ENCODE measurements at regions of chr4 and their contacts with region 1.

Region 1: DNA sequence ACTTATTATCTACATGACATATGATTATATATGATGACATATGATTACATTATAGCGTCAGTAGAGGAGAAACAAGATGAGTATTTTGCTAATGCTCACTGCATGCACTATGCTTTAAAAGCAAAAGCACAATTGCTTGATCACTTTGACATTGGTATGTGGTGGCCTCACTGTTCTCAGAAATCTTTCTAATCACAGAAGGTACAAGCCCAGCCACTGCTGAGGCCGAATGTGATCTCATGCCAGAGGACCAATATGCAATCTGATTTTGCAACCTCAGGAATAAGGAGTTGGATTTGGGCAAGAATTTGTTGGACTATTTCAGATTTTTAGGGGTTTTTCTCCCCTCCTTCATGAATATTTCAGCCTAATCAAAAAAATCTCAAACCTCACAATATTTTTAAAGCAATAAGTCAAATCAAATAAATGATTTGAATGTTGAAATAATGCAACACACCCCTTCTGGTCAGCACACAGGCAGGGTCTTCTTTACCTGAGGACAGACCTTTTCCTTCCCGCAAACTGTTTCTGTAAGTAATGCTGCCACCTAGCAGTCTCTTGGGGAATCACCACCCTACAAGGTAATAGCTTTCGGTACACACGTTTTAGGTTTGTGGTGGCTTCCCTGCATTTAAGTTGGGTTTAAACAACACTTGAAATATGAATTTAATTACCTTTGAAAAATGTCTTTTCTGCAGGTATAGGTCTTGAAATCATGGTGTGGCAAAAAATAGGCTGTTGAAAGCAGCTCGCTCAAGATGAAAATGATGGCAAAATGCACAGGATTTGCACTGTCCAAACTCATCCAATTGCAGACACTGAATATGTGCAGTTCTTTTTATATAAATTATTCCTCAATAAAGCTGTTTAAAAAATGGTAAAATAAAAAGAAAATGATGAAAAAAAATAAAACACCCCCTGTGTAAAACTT is 4.8 kb upstream of the CXCL13 start:
- DNase-seq: no peak
- ATAC-seq: peak; percentile 88
- H3K4me3 ChIP-seq: no peak overlapping the region
- H3K27ac ChIP-seq: no peak overlapping the region
- H3K4me1 ChIP-seq: no peaks in the 10 kb centered on the region
- H3K27me3 ChIP-seq: no peaks in the 10 kb centered on the region
- CTCF ChIP-seq: peak; percentile 81 to 85 (median 82)
- EP300 ChIP-seq: no peak
- POLR2A ChIP-seq: no peak
- RAD21 ChIP-seq: peak; percentile 86

Region 2: GRCh38 chr4:77358315-77358928 is 242.4 kb before region 1 on chr4:
- CTCF ChIA-PET with region 1: interaction called, 12 read pairs
- POLR2A ChIA-PET with region 1: no interaction called
- RAD21 ChIA-PET with region 1: no interaction called
- SMC1A ChIA-PET with region 1: interaction called, 4 read pairs
- in situ Hi-C with region 1: no loop called
- intact Hi-C with region 1: no loop called
- DNase-seq: no peak
- ATAC-seq: peak; percentile 88
- H3K4me3 ChIP-seq: no peak overlapping the region
- H3K27ac ChIP-seq: no peak overlapping the region
- H3K4me1 ChIP-seq: no peaks in the 10 kb centered on the region; the same call in 1 of the 2 replicates
- H3K27me3 ChIP-seq: no peaks in the 10 kb centered on the region; a peak in 1 of 4 replicates
- CTCF ChIP-seq: peak; percentile 60 to 65 (median 60); a peak in 5 of 6 replicates
- EP300 ChIP-seq: no peak
- POLR2A ChIP-seq: no peak
- RAD21 ChIP-seq: peak; percentile 67

Region 3: DNA sequence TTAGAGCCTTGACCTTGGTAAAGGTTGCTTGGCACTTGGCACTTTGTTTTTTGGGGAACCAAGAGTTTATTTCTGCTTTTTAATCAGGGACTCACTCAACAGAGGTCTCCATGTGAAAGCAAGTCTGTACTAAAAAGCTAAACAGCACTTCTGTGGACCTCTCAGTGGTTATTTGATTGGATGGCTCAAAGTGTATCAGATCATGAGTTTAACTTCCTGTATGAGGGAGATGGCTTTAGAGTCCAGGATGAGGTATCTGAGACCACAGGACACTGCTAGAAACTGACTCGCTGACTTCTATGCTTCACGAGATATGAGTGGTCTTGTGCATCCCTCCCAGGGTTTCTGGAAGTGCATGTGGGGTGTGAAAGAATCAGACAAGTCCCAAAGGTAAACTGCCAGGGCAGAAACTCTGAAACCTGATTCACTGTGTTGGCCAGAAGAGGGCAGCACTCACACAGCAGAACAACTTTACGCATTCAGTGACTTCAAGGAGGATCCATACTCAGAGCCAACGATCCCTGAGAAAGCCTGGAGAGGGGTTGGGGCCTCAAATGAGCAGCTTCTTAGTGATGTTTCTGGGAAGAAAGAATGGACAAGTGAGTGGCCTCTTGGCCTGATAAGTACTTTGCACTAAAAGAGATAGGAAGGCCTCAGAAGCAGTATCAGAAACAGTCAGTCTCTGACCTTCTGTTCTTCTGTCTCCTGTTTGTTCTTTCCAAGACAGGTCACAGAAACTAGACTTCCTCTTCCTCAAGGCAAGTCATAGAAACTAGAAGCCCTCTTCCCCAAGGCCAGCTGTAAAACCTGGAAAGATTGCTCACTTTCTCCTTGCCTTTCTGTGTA is 215.4 kb before region 1 on chr4:
- CTCF ChIA-PET with region 1: interaction called, 84 read pairs
- POLR2A ChIA-PET with region 1: no interaction called
- RAD21 ChIA-PET with region 1: interaction called, 16 read pairs
- SMC1A ChIA-PET with region 1: interaction called, 43 read pairs
- in situ Hi-C with region 1: loop called (anchors 5 kb)
- intact Hi-C with region 1: loop called (anchors 1 kb)
- DNase-seq: peak; percentile 15
- ATAC-seq: peak; percentile 93
- H3K4me3 ChIP-seq: no peak overlapping the region
- H3K27ac ChIP-seq: no peak overlapping the region
- H3K4me1 ChIP-seq: no peaks in the 10 kb centered on the region
- H3K27me3 ChIP-seq: no peaks in the 10 kb centered on the region
- CTCF ChIP-seq: peak; percentile 84 to 85 (median 84)
- EP300 ChIP-seq: no peak
- POLR2A ChIP-seq: no peak
- RAD21 ChIP-seq: peak; percentile 89

Region 4: GRCh38 chr4:77465271-77465670 is 135.5 kb before region 1 on chr4:
- CTCF ChIA-PET with region 1: interaction called, 63 read pairs
- POLR2A ChIA-PET with region 1: interaction called, 3 read pairs
- RAD21 ChIA-PET with region 1: interaction called, 15 read pairs
- SMC1A ChIA-PET with region 1: interaction called, 25 read pairs
- in situ Hi-C with region 1: no loop called
- intact Hi-C with region 1: loop called (anchors 5 kb)
- DNase-seq: no peak
- ATAC-seq: no peak
- H3K4me3 ChIP-seq: no peak overlapping the region
- H3K27ac ChIP-seq: no peak overlapping the region
- H3K4me1 ChIP-seq: no peaks in the 10 kb centered on the region
- H3K27me3 ChIP-seq: no peaks in the 10 kb centered on the region
- CTCF ChIP-seq: peak in 2 of 3 experiments; percentile 28 to 36; a peak in 3 of 6 replicates
- EP300 ChIP-seq: no peak
- POLR2A ChIP-seq: no peak
- RAD21 ChIP-seq: peak; percentile 55

Region 5: DNA sequence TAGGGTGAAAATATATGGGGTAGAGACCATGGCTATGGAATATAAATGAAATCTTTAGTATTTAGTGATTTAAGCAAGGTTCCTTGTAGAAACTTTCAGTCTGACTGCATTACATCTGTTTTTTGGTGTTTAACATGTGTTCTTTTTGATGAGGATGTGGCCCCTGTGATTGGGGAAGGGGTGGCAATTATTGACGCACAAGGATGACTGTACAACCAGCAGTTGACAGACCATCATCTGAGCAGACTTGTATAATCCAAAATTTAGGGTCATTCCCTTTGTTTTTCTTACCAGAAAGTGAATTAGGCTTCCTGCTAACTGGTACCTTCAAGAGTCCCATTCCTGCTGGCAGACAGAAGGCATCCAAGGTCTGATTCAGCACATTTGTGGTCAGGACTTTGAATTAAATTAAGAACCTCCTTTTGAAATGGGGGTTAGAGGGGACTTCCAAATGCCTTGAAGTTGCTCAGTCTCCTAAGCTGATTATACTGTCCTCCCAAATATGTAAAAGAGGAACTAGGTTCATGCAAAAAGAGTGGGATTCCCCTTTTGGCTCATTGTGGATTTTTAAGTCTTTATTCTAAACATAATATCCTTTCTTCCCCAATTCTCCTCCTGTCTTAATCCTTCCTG is 107.5 kb before region 1 on chr4:
- CTCF ChIA-PET with region 1: interaction called, 9 read pairs
- POLR2A ChIA-PET with region 1: no interaction called
- RAD21 ChIA-PET with region 1: no interaction called
- SMC1A ChIA-PET with region 1: interaction called, 11 read pairs
- in situ Hi-C with region 1: no loop called
- intact Hi-C with region 1: no loop called
- DNase-seq: peak; percentile 35
- ATAC-seq: peak; percentile 91
- H3K4me3 ChIP-seq: no peak overlapping the region
- H3K27ac ChIP-seq: peak overlapping the region; percentile 35; the same call in 1 of the 2 replicates
- H3K4me1 ChIP-seq: peaks cover 5% of the 10 kb centered on the region; the same call in 1 of the 2 replicates
- H3K27me3 ChIP-seq: no peaks in the 10 kb centered on the region
- CTCF ChIP-seq: no peak
- EP300 ChIP-seq: 0 out of 4 replicates have a peak, but pooled peaks of 1 of the 2 experiments have one; percentile 36
- POLR2A ChIP-seq: no peak
- RAD21 ChIP-seq: no peak

Region 6: DNA sequence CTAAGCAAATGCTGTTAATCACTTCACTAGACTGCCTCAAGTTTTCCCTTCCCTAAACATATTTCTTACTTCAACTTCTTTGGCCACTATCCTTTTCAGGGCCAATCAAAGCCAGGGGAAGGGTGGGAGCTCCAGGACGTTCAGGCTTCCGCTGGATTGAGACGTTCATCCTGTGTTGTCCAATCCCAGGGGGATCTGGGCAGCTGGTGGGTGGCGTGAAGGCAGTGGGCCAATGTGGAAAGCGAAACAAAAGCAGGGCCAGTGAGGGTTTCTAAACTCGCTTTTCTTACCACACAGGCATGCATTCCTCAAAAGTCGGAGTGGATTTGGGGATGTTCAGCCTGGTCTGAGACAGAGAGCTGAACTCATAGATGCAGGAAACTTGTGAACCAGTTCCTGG is 12.5 kb after region 1 on chr4:
- CTCF ChIA-PET with region 1: interaction called, 22 read pairs
- POLR2A ChIA-PET with region 1: no interaction called
- RAD21 ChIA-PET with region 1: interaction called, 8 read pairs
- SMC1A ChIA-PET with region 1: interaction called, 6 read pairs
- in situ Hi-C with region 1: no loop called
- intact Hi-C with region 1: no loop called
- DNase-seq: no peak
- ATAC-seq: no peak
- H3K4me3 ChIP-seq: no peak overlapping the region
- H3K27ac ChIP-seq: no peak overlapping the region
- H3K4me1 ChIP-seq: no peaks in the 10 kb centered on the region
- H3K27me3 ChIP-seq: peaks cover 0 to 2% of the 10 kb centered on the region in 2 experiments; a peak in 1 of 4 replicates
- CTCF ChIP-seq: no peak
- EP300 ChIP-seq: no peak
- POLR2A ChIP-seq: no peak
- RAD21 ChIP-seq: no peak

Region 7: GRCh38 chr4:77692847-77693432 is 92.2 kb after region 1 on chr4:
- CTCF ChIA-PET with region 1: no interaction called
- POLR2A ChIA-PET with region 1: no interaction called
- RAD21 ChIA-PET with region 1: no interaction called
- SMC1A ChIA-PET with region 1: no interaction called
- in situ Hi-C with region 1: no loop called
- intact Hi-C with region 1: no loop called
- DNase-seq: no peak
- ATAC-seq: no peak
- H3K4me3 ChIP-seq: no peak overlapping the region
- H3K27ac ChIP-seq: no peak overlapping the region
- H3K4me1 ChIP-seq: no peaks in the 10 kb centered on the region
- H3K27me3 ChIP-seq: no peaks in the 10 kb centered on the region; a peak in 1 of 4 replicates
- CTCF ChIP-seq: no peak
- EP300 ChIP-seq: no peak
- POLR2A ChIP-seq: no peak
- RAD21 ChIP-seq: no peak

Region 8: GRCh38 chr4:77742054-77742453 is 141.3 kb after region 1 on chr4:
- CTCF ChIA-PET with region 1: no interaction called
- POLR2A ChIA-PET with region 1: no interaction called
- RAD21 ChIA-PET with region 1: no interaction called
- SMC1A ChIA-PET with region 1: no interaction called
- in situ Hi-C with region 1: no loop called
- intact Hi-C with region 1: no loop called
- DNase-seq: no peak
- ATAC-seq: no peak
- H3K4me3 ChIP-seq: no peak overlapping the region
- H3K27ac ChIP-seq: no peak overlapping the region
- H3K4me1 ChIP-seq: no peaks in the 10 kb centered on the region
- H3K27me3 ChIP-seq: no peaks in the 10 kb centered on the region
- CTCF ChIP-seq: no peak
- EP300 ChIP-seq: no peak
- POLR2A ChIP-seq: no peak
- RAD21 ChIP-seq: no peak